Activated CD8-positive, alpha-beta memory T cell treated with anti-CD3 and anti-CD28 coated beads, Interleukin-2, amount 10 ng/mL, durations not matched to agents 7 days and 5 days (primary cell): ENCODE measurements at regions of chr3 and their contacts with region 1.

Region 1: GRCh38 chr3:50436114-50436674 is 67.2 kb downstream of the CACNA2D2 start:
- DNase-seq: peak; percentile 85
- ATAC-seq: peak; percentile 97
- H3K4me3 Mint-ChIP-seq: no peak overlapping the region
- H3K27ac Mint-ChIP-seq: no peak overlapping the region
- H3K4me1 Mint-ChIP-seq: no peaks in the 10 kb centered on the region
- H3K27me3 Mint-ChIP-seq: no peaks in the 10 kb centered on the region

Region 2: DNA sequence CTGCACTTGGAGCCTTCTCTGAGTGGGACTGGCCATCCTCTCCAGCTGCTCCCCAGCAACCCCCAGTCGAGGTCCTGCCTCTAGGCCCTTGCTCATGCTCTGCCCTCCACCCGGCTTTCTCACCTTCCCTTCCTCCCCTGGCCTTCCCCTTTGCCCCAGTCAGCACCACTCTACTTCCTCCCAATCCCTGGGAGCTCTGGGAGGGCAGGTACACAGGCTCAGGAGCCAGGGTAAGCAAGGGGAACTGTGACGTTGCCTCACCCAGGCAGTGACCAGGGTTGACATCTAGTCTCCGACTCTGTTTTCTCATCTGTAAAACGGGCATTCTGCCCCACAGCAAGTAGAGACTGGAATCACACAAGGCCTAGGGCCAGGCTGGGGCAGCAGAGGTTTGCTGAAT is 10.3 kb before region 1 on chr3:
- CTCF ChIA-PET with region 1: no interaction called
- DNase-seq: no peak
- ATAC-seq: no peak
- H3K4me3 Mint-ChIP-seq: no peak overlapping the region
- H3K27ac Mint-ChIP-seq: no peak overlapping the region
- H3K4me1 Mint-ChIP-seq: peaks cover 7% of the 10 kb centered on the region
- H3K27me3 Mint-ChIP-seq: no peaks in the 10 kb centered on the region

Region 3: GRCh38 chr3:50550079-50550741 is 114.0 kb after region 1 on chr3:
- CTCF ChIA-PET with region 1: interaction called, 18 read pairs
- DNase-seq: peak; percentile 80
- ATAC-seq: peak; percentile 73
- H3K4me3 Mint-ChIP-seq: no peak overlapping the region
- H3K27ac Mint-ChIP-seq: no peak overlapping the region
- H3K4me1 Mint-ChIP-seq: peaks cover 5% of the 10 kb centered on the region
- H3K27me3 Mint-ChIP-seq: no peaks in the 10 kb centered on the region

Region 4: GRCh38 chr3:50807266-50807665 is 371.1 kb after region 1 on chr3:
- CTCF ChIA-PET with region 1: no interaction called
- DNase-seq: no peak
- ATAC-seq: no peak
- H3K4me3 Mint-ChIP-seq: no peak overlapping the region
- H3K27ac Mint-ChIP-seq: no peak overlapping the region
- H3K4me1 Mint-ChIP-seq: no peaks in the 10 kb centered on the region
- H3K27me3 Mint-ChIP-seq: no peaks in the 10 kb centered on the region